Left colon (tissue), 2 donors: ENCODE measurements at regions of chr16 and their contacts with region 1.

Region 1: GRCh38 chr16:48156790-48157209 is 1.0 kb upstream of the ABCC12 start:
- DNase-seq: peak; percentile 49 to 88
- ATAC-seq: peak; percentile 78

Region 2: DNA sequence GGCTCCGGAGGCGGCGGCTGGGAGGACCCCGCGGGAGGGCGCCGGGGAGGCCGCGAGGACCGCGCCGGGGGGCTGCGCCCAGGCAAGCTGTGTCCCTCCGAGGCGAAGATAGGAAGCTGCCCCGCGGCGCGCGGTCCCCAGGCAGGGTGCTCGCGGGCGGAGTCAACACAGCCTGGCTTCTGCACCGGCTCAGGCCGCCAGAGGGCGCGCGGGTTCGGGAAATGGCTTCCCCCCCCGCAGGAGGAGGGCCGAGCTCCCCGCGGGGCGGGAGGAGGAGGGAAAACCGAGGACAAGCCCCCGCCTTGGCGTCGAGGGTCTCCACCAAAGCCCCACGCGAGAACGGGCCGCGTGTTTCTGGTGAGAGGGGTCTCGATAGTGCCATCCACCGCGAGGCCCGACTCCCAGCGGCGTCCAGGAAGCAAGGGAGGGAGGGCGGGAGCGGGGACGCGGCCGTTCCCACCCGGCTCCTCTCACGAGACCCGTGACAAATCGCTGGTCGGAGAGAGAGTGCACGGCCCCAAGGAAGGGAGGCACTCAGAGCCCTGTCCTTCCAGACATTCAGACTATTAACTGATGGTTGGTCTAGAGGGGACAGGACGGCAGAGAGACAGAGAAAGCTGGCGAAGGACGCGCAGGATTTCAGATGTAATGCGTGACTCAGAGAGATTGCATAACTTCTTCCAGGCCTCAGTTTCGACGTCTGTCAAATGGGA is 1118.9 kb before region 1 on chr16:
- intact Hi-C with region 1: loop called in 1 of 2 experiments (anchors 10 kb)
- DNase-seq: peak; percentile 69 to 95
- ATAC-seq: peak; percentile 98